ENCODE measurements at regions of chr1 and their contacts with region 1.

Region 1: GRCh38 chr1:212488397-212489283 is 55.9 kb downstream of the NENF start:
- DNase-seq: no peak
- H3K4me3 ChIP-seq: no peak overlapping the region
- H3K27ac ChIP-seq: no peak overlapping the region
- H3K4me1 ChIP-seq: no peaks in the 10 kb centered on the region
- H3K27me3 ChIP-seq: no peaks in the 10 kb centered on the region
- CTCF ChIP-seq: no peak

Region 2: DNA sequence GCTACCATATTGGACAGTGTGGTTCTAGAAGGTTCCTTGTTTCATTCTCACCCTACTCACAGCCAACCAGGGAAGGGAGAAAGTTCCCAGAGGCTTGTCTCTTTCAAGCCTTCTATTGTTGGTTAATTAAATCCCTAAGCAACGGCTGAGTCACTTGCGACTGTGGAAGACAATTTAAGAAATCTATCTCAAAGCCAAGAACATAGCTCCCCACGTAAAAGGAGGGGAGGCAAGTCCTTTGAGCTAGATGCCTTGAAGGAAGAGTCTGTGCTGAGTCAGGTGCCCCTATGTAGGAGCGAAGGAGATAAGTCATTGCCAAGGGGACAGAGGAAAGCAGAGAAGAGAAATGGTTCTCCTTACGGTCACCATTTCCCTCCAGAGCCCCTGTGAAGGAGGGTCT is 282.8 kb before region 1 on chr1:
- CTCF ChIA-PET with region 1: no interaction called
- POLR2A ChIA-PET with region 1: interaction called, 10 read pairs
- intact Hi-C with region 1: no loop called
- DNase-seq: peak; percentile 45
- H3K4me3 ChIP-seq: no peak overlapping the region
- H3K27ac ChIP-seq: no peak overlapping the region
- H3K4me1 ChIP-seq: no peaks in the 10 kb centered on the region
- H3K27me3 ChIP-seq: no peaks in the 10 kb centered on the region
- CTCF ChIP-seq: no peak

Region 3: DNA sequence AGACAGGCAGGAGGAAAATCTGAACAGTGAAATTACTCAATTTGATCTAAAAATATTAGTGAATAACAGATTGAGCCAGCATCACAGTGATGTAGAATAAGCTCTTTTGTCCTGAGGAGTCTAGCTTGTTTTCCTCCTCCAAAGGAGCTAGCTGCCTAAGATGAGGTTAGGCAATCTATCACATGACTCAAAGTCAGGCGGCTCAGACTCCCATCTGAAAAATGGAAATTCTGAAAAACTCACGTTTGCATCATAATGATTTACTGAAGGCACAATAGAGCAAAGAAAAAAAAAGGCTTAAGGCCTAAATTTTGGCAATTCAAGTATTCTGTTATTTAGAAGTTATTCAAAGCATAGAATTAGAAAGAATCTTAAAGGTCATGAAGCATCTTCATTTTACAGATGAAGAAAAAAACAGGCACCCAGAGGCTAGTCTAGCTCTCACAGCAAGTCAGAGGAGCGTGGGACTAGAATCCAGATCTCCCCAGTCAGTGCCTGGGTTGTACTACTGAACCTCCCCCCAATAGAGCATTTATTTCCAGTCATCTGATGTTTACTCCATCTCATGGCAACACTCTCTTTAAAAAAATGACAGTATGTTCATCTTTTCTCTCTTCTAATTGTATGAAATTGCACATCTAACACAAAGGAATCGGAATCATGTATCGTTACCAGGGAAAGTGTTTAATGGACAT is 57.4 kb after region 1 on chr1:
- CTCF ChIA-PET with region 1: no interaction called
- POLR2A ChIA-PET with region 1: no interaction called
- intact Hi-C with region 1: no loop called
- DNase-seq: no peak
- H3K4me3 ChIP-seq: no peak overlapping the region
- H3K27ac ChIP-seq: no peak overlapping the region
- H3K4me1 ChIP-seq: no peaks in the 10 kb centered on the region
- H3K27me3 ChIP-seq: no peaks in the 10 kb centered on the region
- CTCF ChIP-seq: no peak